Activated T-helper 1 cell treated with anti-CD3 and anti-CD28 coated beads, Interleukin-12 subunit alpha, Interleukin-12 subunit beta, Interleukin-2, Interleukin-4 antibody, amounts not matched to agents 30 ng/mL and 10 ng/mL and 1 ng/mL, durations not matched to agents 14 hours and 24 hours and 36 hours (primary cell): ENCODE measurements at regions of chr12 and their contacts with region 1.

Region 1: GRCh38 chr12:118372541-118373495 is at the start of gene TAOK3:
- DNase-seq: peak; percentile 94
- H3K4me3 Mint-ChIP-seq: peak within 1 kb of the TSS; percentile 97
- H3K27ac Mint-ChIP-seq: peak within 1 kb of the TSS; percentile 77
- H3K4me1 Mint-ChIP-seq: peaks cover 52% of the 10 kb centered on the region
- H3K27me3 Mint-ChIP-seq: peaks cover 13% of the 10 kb centered on the region
- total RNA-seq, gene TAOK3: 59.5 and 59.7 TPM in 2 replicates

Region 2: GRCh38 chr12:118016424-118017264 is 356.2 kb before region 1 on chr12 and contains the start of gene RFC5:
- intact Hi-C with region 1: loop called (anchors 1 kb)
- DNase-seq: peak; percentile 96
- H3K4me3 Mint-ChIP-seq: peak within 1 kb of the TSS; percentile 98
- H3K27ac Mint-ChIP-seq: peak within 1 kb of the TSS; percentile 94
- H3K4me1 Mint-ChIP-seq: peaks cover 29% of the 10 kb centered on the region
- H3K27me3 Mint-ChIP-seq: peaks cover 10% of the 10 kb centered on the region
- total RNA-seq, gene RFC5: 73.8 and 87.0 TPM in 2 replicates

Region 3: GRCh38 chr12:118120579-118121363 is 252.0 kb before region 1 on chr12:
- intact Hi-C with region 1: loop called (anchors 1 kb)
- DNase-seq: peak; percentile 28
- H3K4me3 Mint-ChIP-seq: no peak overlapping the region
- H3K27ac Mint-ChIP-seq: no peak overlapping the region
- H3K4me1 Mint-ChIP-seq: peaks cover 14% of the 10 kb centered on the region
- H3K27me3 Mint-ChIP-seq: peaks cover 2% of the 10 kb centered on the region

Region 4: GRCh38 chr12:118183705-118184104 is 189.1 kb before region 1 on chr12:
- intact Hi-C with region 1: loop called (anchors 1 kb)
- DNase-seq: no peak
- H3K4me3 Mint-ChIP-seq: no peak overlapping the region
- H3K27ac Mint-ChIP-seq: no peak overlapping the region
- H3K4me1 Mint-ChIP-seq: peaks cover 9% of the 10 kb centered on the region
- H3K27me3 Mint-ChIP-seq: no peaks in the 10 kb centered on the region

Region 5: DNA sequence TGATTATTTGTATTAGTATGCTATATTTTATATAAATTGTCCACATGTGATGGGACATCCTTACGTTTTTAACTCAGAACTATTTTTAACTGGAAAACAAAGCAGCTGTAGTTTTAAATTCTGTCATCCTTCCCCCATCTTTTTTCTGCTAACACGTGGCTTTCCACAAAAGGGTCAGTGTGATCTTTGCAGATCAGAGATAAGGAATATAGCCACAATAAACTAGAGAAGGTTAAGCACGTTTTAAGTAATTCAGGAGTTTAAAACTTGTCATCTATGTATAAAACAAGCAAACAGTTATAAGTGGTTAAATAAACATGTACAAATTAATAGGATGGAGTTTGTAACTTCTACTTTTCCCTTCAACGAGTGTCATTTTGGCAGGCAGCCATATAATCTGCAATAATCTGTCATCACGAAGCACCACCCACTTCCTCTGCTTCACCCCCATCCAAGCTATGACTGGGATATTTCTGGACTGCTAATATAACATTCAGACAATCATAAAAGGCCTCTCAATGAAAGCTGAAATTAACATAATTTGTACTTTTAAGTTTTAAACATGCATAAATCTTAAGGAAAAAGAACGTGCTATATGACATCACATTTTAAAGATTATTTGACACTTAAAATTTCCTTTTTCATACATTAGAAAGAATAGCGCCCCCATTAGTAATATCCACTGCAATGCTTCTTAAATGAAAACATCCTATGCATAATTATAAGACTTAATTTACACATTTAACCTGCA is 15.4 kb before region 1 on chr12:
- intact Hi-C with region 1: loop called (anchors 1 kb)
- DNase-seq: no peak
- H3K4me3 Mint-ChIP-seq: peak overlapping the region; percentile 99
- H3K27ac Mint-ChIP-seq: peak overlapping the region; percentile 95
- H3K4me1 Mint-ChIP-seq: peaks cover 58% of the 10 kb centered on the region
- H3K27me3 Mint-ChIP-seq: no peaks in the 10 kb centered on the region